Endothelial cell of umbilical vein (primary cell): ENCODE measurements at regions of chr1 and their contacts with region 1.

Region 1: DNA sequence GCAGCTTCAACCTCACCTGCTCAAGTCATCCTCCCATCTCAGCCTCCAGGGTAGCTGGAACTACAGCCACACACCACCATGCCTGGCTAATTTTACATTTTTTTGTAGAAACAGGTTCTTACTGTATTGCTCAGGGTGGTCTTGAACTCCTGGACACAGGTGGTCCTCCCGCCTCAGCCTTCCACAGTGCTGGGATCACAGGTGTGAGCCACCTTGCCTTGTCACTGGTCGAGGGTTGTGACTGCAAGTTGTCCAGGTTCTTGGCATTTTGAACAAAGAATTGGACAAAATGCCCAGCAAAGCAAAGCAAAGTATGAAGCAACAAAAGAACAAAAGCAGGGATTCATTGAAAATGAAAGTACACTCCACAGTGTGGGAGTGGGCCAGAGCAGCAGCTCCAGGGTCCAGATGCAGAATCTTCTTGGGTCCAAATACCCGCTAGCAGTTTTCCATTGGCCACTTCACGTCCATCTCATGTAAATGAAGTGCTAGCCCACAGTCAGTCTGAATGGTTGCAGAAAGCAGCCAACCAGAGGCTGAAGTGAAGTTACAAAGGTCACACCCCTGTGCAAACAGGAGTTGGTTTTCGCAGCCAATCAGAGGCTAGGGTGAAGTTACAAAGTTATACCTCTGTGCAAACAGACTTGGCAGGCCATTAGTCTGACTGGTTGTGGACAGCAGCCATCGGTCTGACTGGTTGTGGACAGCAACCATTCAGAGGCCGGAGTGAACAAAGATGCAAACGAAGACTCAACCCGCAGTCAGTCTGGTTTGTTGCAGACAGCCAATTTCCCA is 109.5 kb upstream of the KIF26B start:
- DNase-seq: no peak
- H3K4me3 ChIP-seq: no peak overlapping the region
- H3K27ac ChIP-seq: no peak overlapping the region
- H3K4me1 ChIP-seq: no peaks in the 10 kb centered on the region
- H3K27me3 ChIP-seq: no peaks in the 10 kb centered on the region
- CTCF ChIP-seq: no peak
- POLR2A ChIP-seq: no peak

Region 2: DNA sequence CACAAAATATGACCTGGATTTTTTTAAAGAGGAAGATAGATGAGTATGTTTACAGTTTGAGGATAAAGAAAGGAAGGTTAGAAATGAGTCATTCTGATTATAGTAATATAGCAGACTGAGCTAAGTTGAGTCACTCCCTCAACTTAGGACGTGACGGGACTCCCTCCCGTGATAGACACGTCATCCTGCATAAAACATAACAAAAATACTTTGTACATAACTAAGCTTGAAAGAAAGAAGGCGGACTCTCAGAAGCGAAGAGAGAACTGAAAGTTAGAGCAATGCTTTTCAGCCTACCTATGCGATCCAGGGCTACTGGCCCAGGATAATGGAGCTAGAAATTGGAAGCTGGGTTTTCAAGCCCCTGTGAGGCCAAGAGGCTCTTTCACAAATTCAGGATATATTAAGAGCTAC is 445.3 kb before region 1 on chr1:
- CTCF ChIA-PET with region 1: interaction called, 44 read pairs
- POLR2A ChIA-PET with region 1: no interaction called
- dilution Hi-C with region 1: no loop called
- intact Hi-C with region 1: loop called (anchors 1 kb)
- DNase-seq: peak; percentile 96
- H3K4me3 ChIP-seq: peak overlapping the region in 2 of 3 experiments; percentile 12 to 63
- H3K27ac ChIP-seq: peak overlapping the region; percentile 92
- H3K4me1 ChIP-seq: peaks cover 15% of the 10 kb centered on the region
- H3K27me3 ChIP-seq: peaks cover 0 to 2% of the 10 kb centered on the region in 2 experiments
- CTCF ChIP-seq: no peak
- POLR2A ChIP-seq: no peak

Region 3: GRCh38 chr1:244796718-244797406 is 248.4 kb before region 1 on chr1:
- CTCF ChIA-PET with region 1: interaction called, 131 read pairs
- POLR2A ChIA-PET with region 1: no interaction called
- dilution Hi-C with region 1: no loop called
- intact Hi-C with region 1: loop called (anchors 1 kb)
- DNase-seq: peak; percentile 70
- H3K4me3 ChIP-seq: no peak overlapping the region
- H3K27ac ChIP-seq: no peak overlapping the region
- H3K4me1 ChIP-seq: no peaks in the 10 kb centered on the region
- H3K27me3 ChIP-seq: no peaks in the 10 kb centered on the region
- CTCF ChIP-seq: peak; percentile 63 to 69
- POLR2A ChIP-seq: no peak

Region 4: GRCh38 chr1:244846653-244847052 is 198.6 kb before region 1 on chr1:
- CTCF ChIA-PET with region 1: interaction called, 30 read pairs
- POLR2A ChIA-PET with region 1: no interaction called
- dilution Hi-C with region 1: no loop called
- intact Hi-C with region 1: no loop called
- DNase-seq: no peak
- H3K4me3 ChIP-seq: no peak overlapping the region
- H3K27ac ChIP-seq: no peak overlapping the region
- H3K4me1 ChIP-seq: no peaks in the 10 kb centered on the region
- H3K27me3 ChIP-seq: no peaks in the 10 kb centered on the region
- CTCF ChIP-seq: no peak
- POLR2A ChIP-seq: no peak

Region 5: GRCh38 chr1:244864253-244865027 is 180.8 kb before region 1 on chr1 and contains the start of gene HNRNPU:
- CTCF ChIA-PET with region 1: interaction called, 104 read pairs
- POLR2A ChIA-PET with region 1: interaction called, 14 read pairs
- dilution Hi-C with region 1: no loop called
- intact Hi-C with region 1: loop called (anchors 1 kb)
- DNase-seq: peak; percentile 98
- H3K4me3 ChIP-seq: peak within 1 kb of the TSS; percentile 87 to 96 (median 94)
- H3K27ac ChIP-seq: peak within 1 kb of the TSS; percentile 89
- H3K4me1 ChIP-seq: peaks cover 30% of the 10 kb centered on the region
- H3K27me3 ChIP-seq: no peaks in the 10 kb centered on the region
- CTCF ChIP-seq: peak; percentile 26 to 33
- POLR2A ChIP-seq: peak; percentile 96
- total RNA-seq, gene HNRNPU: 398 and 417 TPM in 2 replicates

Region 6: GRCh38 chr1:244970661-244971551 is 74.4 kb before region 1 on chr1:
- CTCF ChIA-PET with region 1: interaction called, 35 read pairs
- POLR2A ChIA-PET with region 1: no interaction called
- dilution Hi-C with region 1: no loop called
- intact Hi-C with region 1: loop called (anchors 1 kb)
- DNase-seq: peak; percentile 94
- H3K4me3 ChIP-seq: peak overlapping the region; percentile 37 to 86 (median 80)
- H3K27ac ChIP-seq: peak overlapping the region; percentile 96
- H3K4me1 ChIP-seq: peaks cover 15% of the 10 kb centered on the region
- H3K27me3 ChIP-seq: no peaks in the 10 kb centered on the region
- CTCF ChIP-seq: peak; percentile 47 to 77
- POLR2A ChIP-seq: peak; percentile 86

Region 7: GRCh38 chr1:245014247-245015029 is 30.8 kb before region 1 on chr1:
- CTCF ChIA-PET with region 1: interaction called, 15 read pairs
- POLR2A ChIA-PET with region 1: no interaction called
- dilution Hi-C with region 1: no loop called
- intact Hi-C with region 1: no loop called
- DNase-seq: no peak
- H3K4me3 ChIP-seq: no peak overlapping the region
- H3K27ac ChIP-seq: no peak overlapping the region
- H3K4me1 ChIP-seq: no peaks in the 10 kb centered on the region
- H3K27me3 ChIP-seq: no peaks in the 10 kb centered on the region
- CTCF ChIP-seq: no peak
- POLR2A ChIP-seq: no peak